ENCODE measurements at regions of chr6 and their contacts with region 1.

Region 1: GRCh38 chr6:122471107-122472021 is at the start of gene SERINC1:
- DNase-seq: peak; percentile 94
- H3K4me3 Mint-ChIP-seq: peak within 1 kb of the TSS; percentile 98
- H3K27ac Mint-ChIP-seq: peak within 1 kb of the TSS; percentile 100
- H3K4me1 Mint-ChIP-seq: peaks cover 26% of the 10 kb centered on the region
- H3K27me3 Mint-ChIP-seq: no peaks in the 10 kb centered on the region
- CTCF ChIP-seq: no peak
- total RNA-seq, gene SERINC1: 106 and 128 TPM in 2 replicates

Region 2: DNA sequence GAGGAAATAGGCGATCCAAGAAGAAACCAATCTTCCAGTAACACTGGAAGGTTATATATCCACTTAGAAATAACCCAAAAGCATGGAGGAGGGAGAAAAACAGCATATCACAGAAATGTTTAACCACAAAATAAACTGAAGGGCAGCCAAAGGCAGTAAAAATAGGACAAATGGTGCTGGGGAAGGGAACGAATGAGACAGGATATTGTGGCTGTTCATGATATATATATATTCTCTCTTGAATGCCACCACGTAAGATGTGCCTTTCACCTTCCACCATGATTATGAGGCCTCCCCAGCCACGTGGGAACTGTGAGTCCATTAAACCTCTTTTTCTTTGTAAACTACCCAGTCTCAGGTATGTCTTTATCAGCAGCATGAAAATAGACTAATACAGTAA is 1299.5 kb before region 1 on chr6:
- CTCF ChIA-PET with region 1: no interaction called
- POLR2A ChIA-PET with region 1: no interaction called
- intact Hi-C with region 1: no loop called
- DNase-seq: no peak
- H3K4me3 Mint-ChIP-seq: no peak overlapping the region
- H3K27ac Mint-ChIP-seq: no peak overlapping the region
- H3K4me1 Mint-ChIP-seq: no peaks in the 10 kb centered on the region
- H3K27me3 Mint-ChIP-seq: no peaks in the 10 kb centered on the region
- CTCF ChIP-seq: no peak

Region 3: GRCh38 chr6:122381497-122382265 is 89.7 kb before region 1 on chr6:
- CTCF ChIA-PET with region 1: interaction called, 7 read pairs
- POLR2A ChIA-PET with region 1: interaction called, 4 read pairs
- intact Hi-C with region 1: loop called (anchors 2 kb)
- DNase-seq: peak; percentile 61
- H3K4me3 Mint-ChIP-seq: no peak overlapping the region
- H3K27ac Mint-ChIP-seq: no peak overlapping the region
- H3K4me1 Mint-ChIP-seq: no peaks in the 10 kb centered on the region
- H3K27me3 Mint-ChIP-seq: peaks cover 37% of the 10 kb centered on the region
- CTCF ChIP-seq: peak; percentile 67

Region 4: GRCh38 chr6:122399384-122400158 is 71.8 kb before region 1 on chr6 and contains the start of gene HSF2:
- CTCF ChIA-PET with region 1: interaction called, 3 read pairs
- POLR2A ChIA-PET with region 1: interaction called, 22 read pairs
- intact Hi-C with region 1: loop called (anchors 5 kb)
- DNase-seq: peak; percentile 97
- H3K4me3 Mint-ChIP-seq: peak within 1 kb of the TSS; percentile 92
- H3K27ac Mint-ChIP-seq: peak within 1 kb of the TSS; percentile 96
- H3K4me1 Mint-ChIP-seq: peaks cover 23% of the 10 kb centered on the region
- H3K27me3 Mint-ChIP-seq: no peaks in the 10 kb centered on the region
- CTCF ChIP-seq: no peak
- total RNA-seq, gene HSF2: 8.2 and 8.6 TPM in 2 replicates

Region 5: DNA sequence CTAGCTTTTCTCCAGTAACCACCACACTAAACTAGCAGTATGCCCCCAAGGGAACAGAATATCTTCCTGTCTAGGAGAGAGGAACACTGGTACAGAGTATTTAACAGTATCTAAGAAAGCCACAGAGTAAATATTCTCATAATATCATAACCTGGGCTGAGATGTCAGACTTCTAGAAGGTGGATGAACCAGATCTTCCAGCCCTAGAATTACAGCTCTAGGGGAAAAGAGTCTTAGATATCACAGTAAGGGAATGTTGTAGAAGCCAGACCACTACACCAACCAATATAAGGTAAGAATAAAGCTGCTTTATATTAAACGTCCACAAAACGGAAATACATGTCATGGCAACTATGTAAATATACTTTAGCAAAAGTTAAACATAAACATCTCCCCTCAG is 12.2 kb before region 1 on chr6:
- CTCF ChIA-PET with region 1: no interaction called
- POLR2A ChIA-PET with region 1: interaction called, 16 read pairs
- intact Hi-C with region 1: no loop called
- DNase-seq: no peak
- H3K4me3 Mint-ChIP-seq: no peak overlapping the region
- H3K27ac Mint-ChIP-seq: no peak overlapping the region
- H3K4me1 Mint-ChIP-seq: peaks cover 26% of the 10 kb centered on the region
- H3K27me3 Mint-ChIP-seq: no peaks in the 10 kb centered on the region
- CTCF ChIP-seq: no peak

Region 6: GRCh38 chr6:122491919-122492555 is 20.7 kb after region 1 on chr6:
- CTCF ChIA-PET with region 1: interaction called, 15 read pairs
- POLR2A ChIA-PET with region 1: interaction called, 8 read pairs
- intact Hi-C with region 1: no loop called
- DNase-seq: peak; percentile 80
- H3K4me3 Mint-ChIP-seq: no peak overlapping the region
- H3K27ac Mint-ChIP-seq: peak overlapping the region; percentile 2
- H3K4me1 Mint-ChIP-seq: peaks cover 6% of the 10 kb centered on the region
- H3K27me3 Mint-ChIP-seq: no peaks in the 10 kb centered on the region
- CTCF ChIP-seq: peak; percentile 77

Region 7: GRCh38 chr6:122789182-122790027 is 318.0 kb after region 1 on chr6 and contains the start of gene SMPDL3A:
- CTCF ChIA-PET with region 1: no interaction called
- POLR2A ChIA-PET with region 1: interaction called, 17 read pairs
- intact Hi-C with region 1: no loop called
- DNase-seq: peak; percentile 66
- H3K4me3 Mint-ChIP-seq: peak within 1 kb of the TSS; percentile 87
- H3K27ac Mint-ChIP-seq: peak within 1 kb of the TSS; percentile 80
- H3K4me1 Mint-ChIP-seq: peaks cover 15% of the 10 kb centered on the region
- H3K27me3 Mint-ChIP-seq: no peaks in the 10 kb centered on the region
- CTCF ChIP-seq: peak; percentile 35
- total RNA-seq, gene SMPDL3A: 3.5 and 4.7 TPM in 2 replicates